ENCODE measurements at regions of chr5 and their contacts with region 1.

Region 1: DNA sequence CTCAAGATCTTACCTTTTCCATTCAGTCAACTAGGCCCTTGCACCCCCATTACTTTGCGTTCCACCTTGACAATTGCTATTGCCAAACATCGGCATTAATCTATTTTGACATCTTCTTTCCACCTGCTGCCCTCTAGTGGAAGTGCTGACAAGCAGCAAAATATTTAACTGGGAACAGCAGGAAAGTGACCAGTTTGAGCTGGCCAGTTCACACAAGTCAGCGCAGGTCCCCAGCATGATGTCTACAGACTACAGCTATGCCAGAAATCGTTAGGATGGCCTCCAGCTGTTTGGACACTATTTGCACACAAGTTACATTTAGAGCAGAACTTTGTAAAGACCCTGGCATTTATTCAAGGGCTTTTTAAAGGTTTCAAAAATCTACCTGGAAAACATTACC is 160.1 kb downstream of the GHR start:
- DNase-seq: peak; percentile 64
- CTCF ChIP-seq: peak; percentile 90

Region 2: GRCh38 chr5:42057254-42057690 is 526.0 kb before region 1 on chr5:
- CTCF ChIA-PET with region 1: no interaction called
- POLR2A ChIA-PET with region 1: no interaction called
- DNase-seq: peak; percentile 54
- CTCF ChIP-seq: peak; percentile 80

Region 3: DNA sequence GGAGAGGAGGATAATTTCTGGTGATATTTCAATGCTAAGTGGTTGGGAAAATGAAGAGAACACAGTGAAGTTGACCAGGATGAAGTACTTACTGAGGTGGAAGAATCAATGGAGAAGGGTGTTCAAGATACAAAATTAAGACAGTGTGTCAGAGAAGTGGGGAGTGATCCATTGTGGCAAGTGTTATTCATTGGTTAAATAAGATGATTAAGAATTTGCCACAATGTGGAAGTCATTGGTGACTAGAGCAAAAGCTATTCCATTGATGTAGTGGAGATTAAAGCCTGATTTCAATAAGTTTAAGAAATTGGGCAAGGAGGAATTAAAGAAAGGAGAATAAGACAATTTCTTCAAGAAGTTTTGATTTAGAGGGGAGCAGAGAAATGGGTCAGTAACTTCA is 41.2 kb before region 1 on chr5:
- CTCF ChIA-PET with region 1: no interaction called
- POLR2A ChIA-PET with region 1: no interaction called
- DNase-seq: no peak
- CTCF ChIP-seq: no peak

Region 4: GRCh38 chr5:42566652-42567295 is 16.5 kb before region 1 on chr5:
- CTCF ChIA-PET with region 1: interaction called, 38 read pairs
- POLR2A ChIA-PET with region 1: no interaction called
- DNase-seq: no peak
- CTCF ChIP-seq: no peak

Region 5: DNA sequence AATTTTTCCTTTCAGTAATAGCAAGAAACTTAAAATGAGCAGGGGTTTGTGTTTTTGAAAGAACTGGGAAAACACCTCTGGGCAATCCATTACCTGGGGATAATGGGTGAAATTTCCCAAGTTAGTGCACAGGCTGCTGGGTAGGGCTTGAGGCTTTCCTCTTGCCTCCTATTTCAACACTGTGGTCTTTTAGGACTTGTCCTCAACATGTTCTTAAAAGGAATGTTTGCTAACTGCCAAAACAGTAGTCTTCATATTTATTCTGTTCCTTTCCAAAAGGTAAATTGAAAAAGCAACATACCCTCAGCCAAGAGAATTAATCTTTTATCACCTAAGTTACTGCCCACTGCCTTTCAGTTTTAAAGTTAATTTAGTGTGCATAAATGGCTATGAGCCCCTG is 15.0 kb after region 1 on chr5:
- CTCF ChIA-PET with region 1: interaction called, 26 read pairs
- POLR2A ChIA-PET with region 1: no interaction called
- DNase-seq: no peak
- CTCF ChIP-seq: no peak